ENCODE measurements at regions of chr13 and their contacts with region 1.

Region 1: DNA sequence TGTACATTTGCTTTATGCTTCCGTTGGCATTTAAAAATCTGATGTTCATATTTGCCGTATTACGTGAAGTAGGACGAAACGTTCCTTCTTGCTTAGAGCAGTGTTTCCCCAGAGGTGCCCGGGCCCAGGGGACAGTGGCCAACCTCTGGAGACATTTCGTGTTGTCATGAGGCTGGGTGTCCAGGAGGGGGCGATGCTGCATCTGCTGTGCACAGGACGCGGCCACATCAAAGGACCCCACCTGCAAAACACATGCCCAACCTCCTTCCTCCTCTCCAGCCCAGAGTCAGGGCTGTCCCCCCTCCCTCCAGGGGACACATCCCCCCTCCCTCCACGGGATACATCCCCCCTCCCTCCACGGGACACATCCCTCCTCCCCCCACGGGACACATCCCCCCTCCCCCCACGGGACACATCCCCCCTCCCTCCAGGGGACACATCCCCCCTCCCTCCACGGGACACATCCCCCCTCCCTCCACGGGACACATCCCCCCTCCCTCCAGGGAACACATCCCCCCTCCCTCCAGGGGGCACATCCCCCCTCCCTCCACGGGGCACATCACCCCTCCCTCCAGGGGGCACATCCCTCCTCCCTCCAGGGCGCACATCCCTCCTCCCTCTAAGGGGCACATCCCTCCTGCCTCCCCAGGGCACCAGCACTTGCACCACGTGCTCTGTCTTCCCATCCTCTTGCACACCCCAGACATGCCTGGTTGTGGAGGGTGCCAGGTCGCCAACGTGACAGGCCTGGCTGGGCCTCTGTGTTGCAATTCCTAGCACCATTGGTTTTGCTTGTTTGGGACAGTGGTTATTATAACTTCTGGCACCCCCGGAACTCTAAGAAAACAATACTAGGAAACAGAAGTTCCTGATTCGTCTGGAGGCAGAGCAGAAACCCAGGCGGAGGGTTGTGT is 46.7 kb downstream of the GAS6 start:
- DNase-seq: peak; percentile 83 to 92 (median 88)
- ATAC-seq: peak; percentile 35 to 49 (median 42)
- H3K4me3 ChIP-seq: peak overlapping the region in 5 of 12 donors; percentile 4 to 43 (median 10)
- H3K27ac ChIP-seq: peak overlapping the region; percentile 41 to 87 (median 66)
- H3K4me1 ChIP-seq: peaks cover 18 to 76% (median 63%) of the 10 kb centered on the region in 12 donors
- H3K27me3 ChIP-seq: no peaks in the 10 kb centered on the region
- CTCF ChIP-seq: peak; percentile 72 to 91 (median 83)
- POLR2A ChIP-seq: peak in 1 of 2 donors; percentile 13

Region 2: DNA sequence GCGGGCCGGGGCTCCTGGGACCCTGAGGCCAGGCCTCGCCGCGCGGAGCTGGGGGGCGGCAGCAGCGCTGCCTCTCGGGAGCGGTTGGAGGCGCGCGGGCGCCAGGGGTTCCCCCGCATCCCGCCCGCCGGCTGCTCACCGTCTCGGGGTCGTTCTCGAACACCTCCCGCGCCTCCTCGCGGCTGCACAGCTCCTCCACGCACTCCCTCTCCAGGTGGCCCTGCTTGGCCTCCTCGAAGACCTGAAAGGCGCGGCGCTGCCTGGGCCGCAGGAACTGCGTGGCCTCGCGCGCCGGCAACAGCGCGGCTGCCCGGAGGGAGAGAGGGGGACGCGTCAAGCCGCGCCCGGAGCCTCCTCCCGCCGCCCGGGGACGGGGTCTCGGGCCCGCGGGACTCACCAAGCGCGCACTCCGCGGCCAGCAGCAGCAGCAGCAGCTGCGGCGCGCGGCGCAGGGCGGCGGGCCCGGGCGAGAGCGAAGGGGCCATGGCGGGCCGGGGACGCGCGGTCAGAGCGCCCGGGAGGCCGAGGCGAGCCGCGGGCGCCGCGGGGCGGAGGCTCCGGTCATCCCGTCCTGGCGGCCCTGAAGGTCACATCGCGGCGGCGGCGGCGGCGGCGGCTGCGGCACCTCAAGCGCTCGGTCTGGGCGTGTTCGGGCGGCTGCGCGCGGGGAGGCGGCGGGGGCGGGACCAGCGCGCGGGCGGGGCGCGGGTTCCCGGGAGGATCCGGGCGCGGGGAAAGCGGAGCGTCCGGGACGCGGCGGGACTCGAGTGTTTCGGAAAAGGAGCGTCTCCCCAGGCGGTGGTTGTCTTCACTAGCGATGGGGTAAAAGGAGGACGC is 46.5 kb after region 1 on chr13 and contains the start of gene GAS6:
- intact Hi-C with region 1: loop called in 7 of 10 experiments (anchors 1 to 5 kb)
- DNase-seq: peak; percentile 77 to 87 (median 79)
- ATAC-seq: peak in 3 of 4 donors; percentile 48 to 71 (median 69)
- H3K4me3 ChIP-seq: peak within 1 kb of the TSS; percentile 76 to 97 (median 86)
- H3K27ac ChIP-seq: peak within 1 kb of the TSS; percentile 88 to 98 (median 94)
- H3K4me1 ChIP-seq: peaks cover 0 to 49% (median 36%) of the 10 kb centered on the region in 12 donors
- H3K27me3 ChIP-seq: peaks cover 0 to 6% (median 0%) of the 10 kb centered on the region in 9 donors
- CTCF ChIP-seq: peak in 7 of 12 donors; percentile 7 to 29 (median 21)
- POLR2A ChIP-seq: peak in 1 of 2 donors; percentile 48
- total RNA-seq, gene GAS6: 125 to 438 (median 183) TPM

Region 3: GRCh38 chr13:113904411-113904810 is 87.2 kb after region 1 on chr13:
- intact Hi-C with region 1: loop called (anchors 1 to 5 kb)
- DNase-seq: peak in 3 of 5 donors; percentile 63 to 77 (median 76)
- ATAC-seq: peak; percentile 90 to 95 (median 94)
- H3K4me3 ChIP-seq: no peak overlapping the region
- H3K27ac ChIP-seq: no peak overlapping the region
- H3K4me1 ChIP-seq: peaks cover 0 to 10% (median 3%) of the 10 kb centered on the region in 12 donors
- H3K27me3 ChIP-seq: peaks cover 0 to 10% (median 0%) of the 10 kb centered on the region in 9 donors
- CTCF ChIP-seq: peak; percentile 52 to 84 (median 76)
- POLR2A ChIP-seq: no peak

Region 4: GRCh38 chr13:113926301-113926761 is 109.1 kb after region 1 on chr13:
- intact Hi-C with region 1: no loop called
- DNase-seq: peak in 2 of 5 donors; percentile 15 to 42
- ATAC-seq: peak in 1 of 4 donors; percentile 15
- H3K4me3 ChIP-seq: no peak overlapping the region
- H3K27ac ChIP-seq: peak overlapping the region in 5 of 12 donors; percentile 10 to 73 (median 38)
- H3K4me1 ChIP-seq: peaks cover 0 to 38% (median 26%) of the 10 kb centered on the region in 12 donors
- H3K27me3 ChIP-seq: no peaks in the 10 kb centered on the region
- CTCF ChIP-seq: no peak
- POLR2A ChIP-seq: no peak

Region 5: DNA sequence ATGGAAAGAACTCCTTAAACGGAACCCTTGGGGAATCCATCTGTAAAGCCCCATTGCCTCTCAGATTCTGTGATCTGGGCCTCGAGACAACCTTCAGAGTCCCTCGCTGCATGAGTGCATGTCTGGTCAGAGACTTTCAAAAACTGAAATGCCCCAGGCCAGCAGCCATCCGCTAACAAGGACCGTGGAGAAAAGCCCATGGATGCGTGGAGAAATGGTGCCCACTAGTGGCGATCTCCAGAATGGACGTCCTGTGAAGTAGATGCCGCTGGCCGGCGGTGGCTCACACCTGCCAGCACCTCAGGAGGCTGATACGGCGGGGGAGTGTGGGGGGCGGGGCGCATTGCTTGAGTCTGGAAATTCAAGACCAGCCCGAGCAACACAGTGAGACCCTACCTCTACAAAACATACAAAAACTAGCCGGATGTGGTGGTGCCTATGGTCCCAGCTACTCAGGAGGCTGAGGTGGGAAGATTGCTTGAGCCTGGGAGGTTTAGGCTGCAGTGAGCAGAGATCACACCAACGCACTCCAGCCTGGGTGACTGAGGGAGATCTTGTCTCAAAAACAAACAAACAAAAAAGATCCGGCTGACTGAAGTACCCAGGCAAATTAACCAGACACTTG is 409.6 kb after region 1 on chr13:
- intact Hi-C with region 1: loop called in 4 of 10 experiments (anchors 2 to 5 kb)
- DNase-seq: peak; percentile 78 to 88 (median 82)
- ATAC-seq: peak; percentile 64 to 92 (median 86)
- H3K4me3 ChIP-seq: no peak overlapping the region
- H3K27ac ChIP-seq: no peak overlapping the region
- H3K4me1 ChIP-seq: peaks cover 0 to 35% (median 3%) of the 10 kb centered on the region in 12 donors
- H3K27me3 ChIP-seq: peaks cover 0 to 36% (median 9%) of the 10 kb centered on the region in 9 donors
- CTCF ChIP-seq: peak; percentile 84 to 96 (median 90)
- POLR2A ChIP-seq: no peak